Mammary epithelial cell (primary cell): ENCODE measurements at regions of chr19 and their contacts with region 1.

Region 1: GRCh38 chr19:45717166-45717982 is 13.3 kb downstream of the FBXO46 start:
- DNase-seq: peak; percentile 97
- H3K4me3 ChIP-seq: peak overlapping the region; percentile 64 to 91 (median 65)
- H3K27ac ChIP-seq: peak overlapping the region; percentile 87
- H3K4me1 ChIP-seq: peaks cover 23% of the 10 kb centered on the region
- H3K27me3 ChIP-seq: no peaks in the 10 kb centered on the region
- CTCF ChIP-seq: peak; percentile 5 to 29

Region 2: DNA sequence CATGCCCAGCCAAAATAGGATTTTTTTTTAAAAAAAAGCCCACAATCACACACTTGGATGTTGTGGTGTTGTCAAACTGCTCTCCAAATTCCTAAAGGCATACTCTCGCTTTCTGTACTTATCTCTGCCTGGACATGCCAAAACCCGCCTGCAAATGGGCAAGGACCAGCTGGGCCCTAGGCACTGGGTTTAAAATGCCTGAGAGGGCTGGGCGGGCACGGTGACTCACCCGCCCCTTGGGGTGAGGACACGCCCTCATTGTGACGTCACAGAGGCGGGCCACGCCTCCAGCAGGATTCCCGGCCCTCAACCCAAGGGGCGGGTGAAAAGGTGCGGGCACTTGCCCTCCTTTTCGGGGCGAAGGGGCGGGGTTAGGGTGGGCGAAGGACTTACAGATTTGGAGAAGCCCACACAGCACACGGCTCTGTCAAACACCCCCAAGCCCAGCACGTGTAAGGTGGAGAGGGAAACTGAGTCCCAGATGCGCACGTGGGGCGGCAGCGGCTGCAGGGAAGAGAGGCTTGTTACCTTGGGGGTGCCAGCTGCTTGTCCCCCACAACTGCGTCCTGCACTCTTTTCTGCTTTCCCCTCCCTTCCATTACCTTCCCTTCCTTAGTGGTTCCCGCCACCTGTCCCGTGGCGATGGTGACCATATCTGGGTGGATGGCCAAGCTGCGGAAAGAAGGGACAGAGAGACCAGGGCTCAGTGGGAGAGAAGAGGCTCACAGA is 84.7 kb before region 1 on chr19:
- CTCF ChIA-PET with region 1: no interaction called
- dilution Hi-C with region 1: no loop called
- in situ Hi-C with region 1: no loop called
- intact Hi-C with region 1: no loop called
- DNase-seq: peak; percentile 98
- H3K4me3 ChIP-seq: no peak overlapping the region
- H3K27ac ChIP-seq: peak overlapping the region; percentile 97
- H3K4me1 ChIP-seq: peaks cover 28% of the 10 kb centered on the region
- H3K27me3 ChIP-seq: no peaks in the 10 kb centered on the region
- CTCF ChIP-seq: no peak

Region 3: GRCh38 chr19:45753546-45753945 is 36.2 kb after region 1 on chr19:
- CTCF ChIA-PET with region 1: no interaction called
- dilution Hi-C with region 1: no loop called
- in situ Hi-C with region 1: no loop called
- intact Hi-C with region 1: loop called (anchors 1 kb)
- DNase-seq: no peak
- H3K4me3 ChIP-seq: no peak overlapping the region
- H3K27ac ChIP-seq: no peak overlapping the region
- H3K4me1 ChIP-seq: peaks cover 5% of the 10 kb centered on the region
- H3K27me3 ChIP-seq: no peaks in the 10 kb centered on the region
- CTCF ChIP-seq: no peak